ENCODE measurements at regions of chr17 and their contacts with region 1.

Region 1: GRCh38 chr17:43483674-43484372 is at the start of gene DHX8:
- DNase-seq: peak; percentile 100
- ATAC-seq: peak; percentile 94
- H3K4me3 ChIP-seq: peak within 1 kb of the TSS; percentile 76 to 85 (median 78)
- H3K27ac ChIP-seq: peak within 1 kb of the TSS; percentile 73
- H3K4me1 ChIP-seq: peaks cover 75% of the 10 kb centered on the region
- H3K27me3 ChIP-seq: no peaks in the 10 kb centered on the region; a peak in 1 of 5 replicates
- CTCF ChIP-seq: peak; percentile 100
- EP300 ChIP-seq: peak; percentile 51 to 66
- POLR2A ChIP-seq: peak; percentile 83 to 92
- RAD21 ChIP-seq: peak; percentile 100
- total RNA-seq, gene DHX8: 48.9 and 66.9 TPM in 2 replicates

Region 2: DNA sequence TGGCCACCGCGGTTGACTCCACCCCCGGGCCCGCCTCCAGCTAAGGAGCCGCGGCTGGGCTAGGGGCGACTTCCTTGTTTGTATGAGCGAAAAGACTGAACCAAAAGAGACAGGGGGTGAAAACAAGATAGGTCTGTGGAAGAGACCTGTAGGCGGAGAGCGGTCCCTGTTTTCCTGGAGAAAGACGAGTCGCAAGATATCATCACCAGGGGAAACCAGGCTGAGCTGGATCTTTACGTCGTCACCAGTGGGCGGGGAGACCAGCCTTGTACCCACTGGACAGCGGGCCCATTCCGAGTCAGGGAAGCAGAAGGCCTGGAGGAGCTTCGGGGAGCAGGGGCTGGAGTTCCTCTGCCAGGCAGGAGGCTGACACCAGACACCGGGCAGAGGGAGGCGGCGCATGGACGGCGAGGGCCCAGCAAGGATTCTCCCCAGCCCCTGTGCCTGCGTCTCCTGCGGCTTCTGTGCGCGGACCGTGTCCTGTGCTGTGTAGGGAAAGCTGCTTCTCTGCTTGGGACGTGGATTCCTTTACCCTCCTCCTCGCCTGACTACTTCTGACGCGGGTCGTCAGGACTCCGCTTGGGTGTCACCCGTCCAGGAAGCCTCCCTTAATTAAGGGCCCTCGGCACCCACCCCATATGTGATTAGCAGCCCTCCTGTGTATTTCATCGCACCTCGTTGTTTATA is 95.3 kb before region 1 on chr17:
- CTCF ChIA-PET with region 1: interaction called, 381 read pairs
- POLR2A ChIA-PET with region 1: interaction called, 485 read pairs
- in situ Hi-C with region 1: no loop called
- intact Hi-C with region 1: loop called (anchors 1 kb)
- DNase-seq: peak; percentile 81
- ATAC-seq: peak; percentile 71
- H3K4me3 ChIP-seq: peak overlapping the region; percentile 63 to 78 (median 70)
- H3K27ac ChIP-seq: peak overlapping the region; percentile 86
- H3K4me1 ChIP-seq: peaks cover 81% of the 10 kb centered on the region
- H3K27me3 ChIP-seq: no peaks in the 10 kb centered on the region
- CTCF ChIP-seq: peak; percentile 19; the same call in 1 of the 2 replicates
- EP300 ChIP-seq: no peak
- POLR2A ChIP-seq: peak; percentile 85 to 96
- RAD21 ChIP-seq: 0 out of 2 replicates have a peak, but pooled peaks have one; percentile 21

Region 3: DNA sequence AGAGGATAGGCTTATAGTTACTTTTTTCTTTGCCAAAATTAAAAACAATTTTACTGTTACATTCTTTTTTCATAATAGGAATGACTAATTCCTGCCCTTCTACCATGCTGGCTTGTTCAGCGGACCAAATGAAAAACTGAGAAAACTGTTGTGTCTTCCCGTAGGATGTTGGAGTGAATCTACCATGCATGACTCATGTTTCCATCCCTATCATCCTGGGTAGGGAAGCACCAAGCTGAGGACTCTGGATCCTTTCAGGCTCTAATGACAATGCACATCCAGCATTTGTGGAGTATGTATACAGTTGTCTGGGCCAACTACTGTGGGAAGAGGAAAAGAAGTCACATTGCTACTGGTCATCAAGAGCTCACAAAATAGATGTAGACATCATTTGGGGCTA is 41.1 kb before region 1 on chr17:
- CTCF ChIA-PET with region 1: interaction called, 12 read pairs
- POLR2A ChIA-PET with region 1: interaction called, 3 read pairs
- in situ Hi-C with region 1: no loop called
- intact Hi-C with region 1: no loop called
- DNase-seq: no peak
- ATAC-seq: no peak
- H3K4me3 ChIP-seq: no peak overlapping the region
- H3K27ac ChIP-seq: no peak overlapping the region
- H3K4me1 ChIP-seq: peaks cover 46% of the 10 kb centered on the region
- H3K27me3 ChIP-seq: no peaks in the 10 kb centered on the region
- CTCF ChIP-seq: no peak
- EP300 ChIP-seq: no peak
- POLR2A ChIP-seq: no peak
- RAD21 ChIP-seq: no peak

Region 4: GRCh38 chr17:43456661-43457361 is 27.0 kb before region 1 on chr17:
- CTCF ChIA-PET with region 1: no interaction called
- POLR2A ChIA-PET with region 1: interaction called, 47 read pairs
- in situ Hi-C with region 1: no loop called
- intact Hi-C with region 1: no loop called
- DNase-seq: peak; percentile 100
- ATAC-seq: peak; percentile 95
- H3K4me3 ChIP-seq: peak overlapping the region in 1 of 3 experiments; percentile 17; a peak in 1 of 6 replicates
- H3K27ac ChIP-seq: peak overlapping the region; percentile 83
- H3K4me1 ChIP-seq: peaks cover 79% of the 10 kb centered on the region
- H3K27me3 ChIP-seq: no peaks in the 10 kb centered on the region
- CTCF ChIP-seq: peak; percentile 37
- EP300 ChIP-seq: peak; percentile 79 to 99; a peak in 3 of 4 replicates
- POLR2A ChIP-seq: peak; percentile 60 to 68
- RAD21 ChIP-seq: peak; percentile 57; the same call in 1 of the 2 replicates

Region 5: DNA sequence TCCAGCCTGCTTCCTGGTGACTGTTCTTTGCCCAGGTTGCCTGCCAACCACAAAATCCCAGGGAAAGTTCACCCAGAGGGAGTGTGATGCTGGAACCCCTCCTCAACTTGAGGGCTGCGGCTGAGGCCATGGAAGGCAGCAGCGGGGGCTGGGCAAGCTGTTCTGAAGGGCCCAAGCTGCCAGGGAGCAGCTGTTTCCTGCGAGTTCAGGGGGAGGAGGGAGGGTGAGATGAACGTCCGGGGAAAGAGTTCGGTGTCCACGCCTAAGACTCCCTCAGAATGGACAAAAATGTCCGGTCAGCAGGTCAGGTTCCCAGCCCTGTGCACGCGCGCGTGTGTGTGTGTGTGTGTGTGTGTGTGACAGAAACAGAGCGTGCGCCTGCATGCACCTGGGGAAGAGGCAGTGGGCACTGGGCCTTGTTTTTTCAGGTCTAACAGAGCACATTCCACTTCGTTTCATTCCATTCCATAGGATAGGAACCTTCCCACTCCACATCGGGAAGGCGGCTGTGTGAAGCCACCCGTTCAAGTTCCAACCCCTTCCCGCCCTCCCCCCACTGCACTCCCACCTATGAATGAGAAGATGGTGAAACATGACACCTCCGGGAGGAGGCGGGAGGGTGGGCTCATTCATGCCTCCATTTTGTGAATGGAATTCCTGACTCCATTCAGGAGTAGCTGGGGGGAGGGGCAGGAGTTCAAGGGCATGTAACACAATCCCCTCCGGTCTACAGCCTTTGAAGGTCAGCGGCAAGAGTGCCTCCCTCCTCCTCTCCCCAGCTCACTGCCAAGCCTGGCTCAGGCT is 46.7 kb after region 1 on chr17:
- CTCF ChIA-PET with region 1: no interaction called
- POLR2A ChIA-PET with region 1: interaction called, 14 read pairs
- in situ Hi-C with region 1: no loop called
- intact Hi-C with region 1: no loop called
- DNase-seq: peak; percentile 100
- ATAC-seq: peak; percentile 74
- H3K4me3 ChIP-seq: peak overlapping the region in 2 of 3 experiments; percentile 26 to 58; a peak in 4 of 6 replicates
- H3K27ac ChIP-seq: peak overlapping the region; percentile 96
- H3K4me1 ChIP-seq: peaks cover 97% of the 10 kb centered on the region
- H3K27me3 ChIP-seq: no peaks in the 10 kb centered on the region
- CTCF ChIP-seq: peak; percentile 31; the same call in 1 of the 2 replicates
- EP300 ChIP-seq: peak; percentile 97 to 98
- POLR2A ChIP-seq: peak; percentile 82 to 93
- RAD21 ChIP-seq: peak; percentile 45